Activated CD4-positive, alpha-beta T cell treated with anti-CD3 and anti-CD28 coated beads, Interleukin-2, amount 10 ng/mL, durations not matched to agents 24 days and 14 days (primary cell): ENCODE measurements at regions of chr20 and their contacts with region 1.

Region 1: GRCh38 chr20:25584905-25585704 is at the start of gene NINL:
- DNase-seq: peak; percentile 87
- H3K4me3 Mint-ChIP-seq: peak within 1 kb of the TSS; percentile 78
- H3K27ac Mint-ChIP-seq: peak within 1 kb of the TSS; percentile 76
- H3K4me1 Mint-ChIP-seq: peaks cover 12% of the 10 kb centered on the region
- H3K27me3 Mint-ChIP-seq: peaks cover 13% of the 10 kb centered on the region
- total RNA-seq, gene NINL: 3.0 and 3.5 TPM in 2 replicates

Region 2: DNA sequence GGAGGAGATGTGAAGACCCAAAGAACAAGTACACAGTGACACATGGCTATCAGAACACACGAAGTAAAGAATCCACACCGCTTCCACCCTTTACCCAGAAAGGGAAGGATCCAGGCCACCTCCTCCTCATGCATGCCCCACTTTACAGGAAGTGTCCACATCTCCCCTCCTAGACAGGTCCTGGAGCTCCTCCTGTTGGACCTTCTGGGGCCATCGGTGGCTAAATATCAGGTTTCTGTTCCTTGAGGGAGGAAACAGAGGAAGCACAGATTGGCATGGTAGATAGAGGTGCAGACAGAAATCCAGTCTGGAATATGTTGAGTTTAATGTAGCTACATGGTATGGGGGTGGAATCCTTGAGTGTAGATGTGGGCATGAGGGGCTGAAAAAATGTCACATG is 10.7 kb before region 1 on chr20:
- intact Hi-C with region 1: no loop called
- DNase-seq: no peak
- H3K4me3 Mint-ChIP-seq: no peak overlapping the region
- H3K27ac Mint-ChIP-seq: no peak overlapping the region
- H3K4me1 Mint-ChIP-seq: no peaks in the 10 kb centered on the region
- H3K27me3 Mint-ChIP-seq: no peaks in the 10 kb centered on the region

Region 3: DNA sequence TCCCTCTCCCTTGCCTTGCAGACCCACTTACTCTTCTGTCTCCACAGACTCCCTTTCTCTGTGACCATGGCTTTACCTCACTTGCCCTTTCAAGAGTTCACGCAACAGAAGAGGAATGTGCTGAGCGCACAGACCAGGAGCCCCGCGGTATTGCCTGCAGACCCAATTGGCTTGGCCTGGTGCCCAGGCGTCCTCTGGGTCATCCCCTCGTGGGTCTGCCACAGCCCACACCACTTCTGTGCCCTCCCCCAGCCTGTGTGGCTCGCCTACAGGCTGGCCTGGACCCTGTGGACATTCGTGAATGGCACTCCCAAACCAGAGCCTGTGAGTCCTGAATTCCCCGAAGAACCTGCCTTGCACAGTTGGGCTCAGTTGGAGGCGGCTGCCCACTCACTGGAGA is 15.5 kb after region 1 on chr20:
- intact Hi-C with region 1: loop called (anchors 1 kb)
- DNase-seq: no peak
- H3K4me3 Mint-ChIP-seq: no peak overlapping the region
- H3K27ac Mint-ChIP-seq: no peak overlapping the region
- H3K4me1 Mint-ChIP-seq: peaks cover 5% of the 10 kb centered on the region
- H3K27me3 Mint-ChIP-seq: peaks cover 4% of the 10 kb centered on the region

Region 4: GRCh38 chr20:25848222-25848621 is 263.1 kb after region 1 on chr20:
- intact Hi-C with region 1: no loop called
- DNase-seq: no peak
- H3K4me3 Mint-ChIP-seq: no peak overlapping the region
- H3K27ac Mint-ChIP-seq: no peak overlapping the region
- H3K4me1 Mint-ChIP-seq: peaks cover 4% of the 10 kb centered on the region
- H3K27me3 Mint-ChIP-seq: no peaks in the 10 kb centered on the region